ENCODE measurements at regions of chr15 and their contacts with region 1.

Region 1: DNA sequence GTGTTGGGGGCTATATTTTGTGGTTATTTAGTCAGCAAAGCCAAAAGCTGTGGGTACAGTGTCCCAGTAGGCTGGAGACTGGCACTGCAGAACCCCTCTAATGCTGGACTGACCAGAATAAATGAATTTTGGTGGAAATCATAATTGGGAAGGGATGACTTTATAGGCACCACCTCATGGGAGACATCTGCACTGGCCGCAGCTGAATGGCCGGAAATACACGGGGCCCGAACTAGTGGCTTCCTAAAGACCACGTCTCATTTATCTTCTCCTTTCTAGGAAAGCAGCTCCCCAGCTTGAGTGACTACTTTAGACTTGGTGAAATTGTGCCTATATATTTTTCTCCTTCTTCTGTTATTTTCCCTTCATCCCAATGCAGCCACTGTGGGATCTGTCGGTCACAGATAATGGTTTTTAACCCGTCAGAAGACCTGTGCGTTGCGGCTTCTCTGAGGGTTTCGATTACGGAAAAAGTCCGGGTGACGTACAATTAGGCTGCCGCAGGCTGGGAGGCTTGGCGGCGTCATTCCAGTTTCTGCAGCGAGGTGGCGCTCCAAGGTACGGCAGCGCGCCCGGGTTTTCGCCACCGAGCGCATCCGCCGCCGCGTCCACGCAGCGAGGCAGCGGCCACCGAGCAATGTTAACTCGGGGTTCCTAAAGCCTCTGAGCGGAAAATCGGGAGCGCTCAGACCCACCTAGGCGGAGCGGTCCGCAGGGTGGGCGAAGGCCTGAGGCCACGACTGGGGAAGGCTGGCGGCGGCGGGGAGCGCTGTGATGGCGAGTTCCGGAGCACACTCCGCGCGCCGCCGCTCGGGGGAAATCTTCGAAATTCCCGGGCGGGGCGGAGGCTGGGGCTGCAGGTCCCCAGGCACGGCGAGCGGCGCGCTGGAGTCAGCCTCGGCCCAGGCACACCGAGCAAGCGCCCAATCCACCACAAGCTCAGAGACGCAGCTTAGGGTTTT is 26.3 kb downstream of the NR2F2 start:
- DNase-seq: peak; percentile 88
- H3K4me3 ChIP-seq: peak overlapping the region; percentile 46 to 81 (median 65)
- H3K27ac ChIP-seq: peak overlapping the region; percentile 76
- H3K4me1 ChIP-seq: peaks cover 71% of the 10 kb centered on the region
- H3K27me3 ChIP-seq: no peaks in the 10 kb centered on the region
- CTCF ChIP-seq: peak; percentile 94 to 98
- POLR2A ChIP-seq: no peak

Region 2: DNA sequence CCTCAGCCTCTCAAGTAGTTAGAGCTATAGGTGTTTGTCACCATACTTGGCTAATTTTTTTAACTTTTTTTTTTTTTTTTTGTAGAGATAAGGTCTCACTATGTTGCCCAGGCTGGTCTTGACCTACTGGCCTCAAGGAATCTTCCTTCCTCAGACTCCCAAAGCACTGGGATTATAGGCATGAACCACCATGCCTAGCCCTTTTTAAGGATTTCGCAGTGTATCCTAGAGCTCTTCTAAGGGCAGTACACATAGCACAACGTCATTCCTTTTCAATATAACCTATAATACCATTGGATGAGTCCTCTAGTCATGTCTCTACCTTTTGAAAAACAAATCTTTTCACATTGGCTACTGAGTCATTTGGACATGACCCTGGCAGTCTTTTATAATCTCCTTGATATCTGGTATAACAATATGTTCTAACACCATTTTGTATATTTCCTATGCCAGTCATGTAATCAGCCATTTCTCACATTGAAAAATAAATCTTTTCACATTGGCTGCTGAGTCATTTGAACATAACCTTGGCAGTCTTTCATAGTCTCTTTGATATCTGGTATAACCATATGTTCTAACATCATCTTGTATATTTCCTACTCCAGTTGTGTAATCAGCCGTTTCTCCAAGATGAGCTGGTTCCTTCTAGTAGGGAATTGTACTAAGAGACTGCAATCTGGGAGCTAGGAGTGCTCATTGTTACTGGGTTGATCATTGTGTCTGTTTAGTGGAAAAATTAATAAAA is 1180.7 kb before region 1 on chr15:
- CTCF ChIA-PET with region 1: no interaction called
- POLR2A ChIA-PET with region 1: no interaction called
- dilution Hi-C with region 1: no loop called
- intact Hi-C with region 1: loop called (anchors 2 kb)
- DNase-seq: peak; percentile 94
- H3K4me3 ChIP-seq: no peak overlapping the region
- H3K27ac ChIP-seq: peak overlapping the region; percentile 95
- H3K4me1 ChIP-seq: peaks cover 30% of the 10 kb centered on the region
- H3K27me3 ChIP-seq: no peaks in the 10 kb centered on the region
- CTCF ChIP-seq: no peak
- POLR2A ChIP-seq: no peak

Region 3: GRCh38 chr15:95528920-95529319 is 827.9 kb before region 1 on chr15:
- CTCF ChIA-PET with region 1: no interaction called
- POLR2A ChIA-PET with region 1: no interaction called
- dilution Hi-C with region 1: no loop called
- intact Hi-C with region 1: no loop called
- DNase-seq: no peak
- H3K4me3 ChIP-seq: no peak overlapping the region
- H3K27ac ChIP-seq: no peak overlapping the region
- H3K4me1 ChIP-seq: no peaks in the 10 kb centered on the region
- H3K27me3 ChIP-seq: no peaks in the 10 kb centered on the region
- CTCF ChIP-seq: no peak
- POLR2A ChIP-seq: no peak

Region 4: DNA sequence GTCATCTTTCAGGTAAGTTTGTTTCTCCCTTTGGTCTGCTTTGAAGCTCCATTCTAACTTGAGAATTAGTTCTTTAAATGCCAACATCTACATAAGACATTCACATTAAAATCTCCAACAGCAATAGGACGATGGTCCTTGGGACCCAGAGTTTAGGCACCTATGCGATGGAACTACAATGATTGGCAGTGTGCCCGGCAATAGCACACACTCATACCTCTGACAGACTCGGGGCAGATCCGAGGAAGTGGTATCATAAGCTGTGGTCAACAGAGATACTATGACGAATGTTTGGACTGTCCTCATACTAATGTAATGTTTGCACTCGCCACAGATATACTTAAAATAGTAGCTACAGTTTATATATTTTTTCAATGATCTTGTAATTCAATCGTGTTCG is 60.5 kb before region 1 on chr15:
- CTCF ChIA-PET with region 1: no interaction called
- POLR2A ChIA-PET with region 1: no interaction called
- dilution Hi-C with region 1: no loop called
- intact Hi-C with region 1: no loop called
- DNase-seq: no peak
- H3K4me3 ChIP-seq: no peak overlapping the region
- H3K27ac ChIP-seq: no peak overlapping the region
- H3K4me1 ChIP-seq: no peaks in the 10 kb centered on the region
- H3K27me3 ChIP-seq: no peaks in the 10 kb centered on the region
- CTCF ChIP-seq: no peak
- POLR2A ChIP-seq: no peak

Region 5: GRCh38 chr15:96428742-96429141 is 72.0 kb after region 1 on chr15:
- CTCF ChIA-PET with region 1: no interaction called
- POLR2A ChIA-PET with region 1: no interaction called
- dilution Hi-C with region 1: no loop called
- intact Hi-C with region 1: loop called (anchors 2 kb)
- DNase-seq: peak; percentile 58
- H3K4me3 ChIP-seq: no peak overlapping the region
- H3K27ac ChIP-seq: peak overlapping the region; percentile 28
- H3K4me1 ChIP-seq: peaks cover 17% of the 10 kb centered on the region
- H3K27me3 ChIP-seq: no peaks in the 10 kb centered on the region
- CTCF ChIP-seq: no peak
- POLR2A ChIP-seq: no peak

Region 6: GRCh38 chr15:96574782-96575181 is 218.0 kb after region 1 on chr15:
- CTCF ChIA-PET with region 1: no interaction called
- POLR2A ChIA-PET with region 1: no interaction called
- dilution Hi-C with region 1: no loop called
- intact Hi-C with region 1: no loop called
- DNase-seq: no peak
- H3K4me3 ChIP-seq: no peak overlapping the region
- H3K27ac ChIP-seq: no peak overlapping the region
- H3K4me1 ChIP-seq: no peaks in the 10 kb centered on the region
- H3K27me3 ChIP-seq: peaks cover 0 to 3% of the 10 kb centered on the region in 2 experiments
- CTCF ChIP-seq: no peak
- POLR2A ChIP-seq: no peak

Region 7: GRCh38 chr15:96701443-96701842 is 344.7 kb after region 1 on chr15:
- CTCF ChIA-PET with region 1: no interaction called
- POLR2A ChIA-PET with region 1: no interaction called
- dilution Hi-C with region 1: no loop called
- intact Hi-C with region 1: loop called (anchors 5 kb)
- DNase-seq: no peak
- H3K4me3 ChIP-seq: no peak overlapping the region
- H3K27ac ChIP-seq: no peak overlapping the region
- H3K4me1 ChIP-seq: no peaks in the 10 kb centered on the region
- H3K27me3 ChIP-seq: no peaks in the 10 kb centered on the region
- CTCF ChIP-seq: no peak
- POLR2A ChIP-seq: no peak

Region 8: GRCh38 chr15:97009031-97009431 is 652.3 kb after region 1 on chr15:
- CTCF ChIA-PET with region 1: no interaction called
- POLR2A ChIA-PET with region 1: no interaction called
- dilution Hi-C with region 1: no loop called
- intact Hi-C with region 1: no loop called
- DNase-seq: no peak
- H3K4me3 ChIP-seq: no peak overlapping the region
- H3K27ac ChIP-seq: no peak overlapping the region
- H3K4me1 ChIP-seq: no peaks in the 10 kb centered on the region
- H3K27me3 ChIP-seq: no peaks in the 10 kb centered on the region
- CTCF ChIP-seq: no peak
- POLR2A ChIP-seq: no peak

Region 9: GRCh38 chr15:97248376-97248775 is 891.6 kb after region 1 on chr15:
- CTCF ChIA-PET with region 1: interaction called, 63 read pairs
- POLR2A ChIA-PET with region 1: no interaction called
- dilution Hi-C with region 1: no loop called
- intact Hi-C with region 1: loop called (anchors 1 kb)
- DNase-seq: no peak
- H3K4me3 ChIP-seq: no peak overlapping the region
- H3K27ac ChIP-seq: no peak overlapping the region
- H3K4me1 ChIP-seq: no peaks in the 10 kb centered on the region
- H3K27me3 ChIP-seq: no peaks in the 10 kb centered on the region
- CTCF ChIP-seq: no peak
- POLR2A ChIP-seq: no peak

Region 10: DNA sequence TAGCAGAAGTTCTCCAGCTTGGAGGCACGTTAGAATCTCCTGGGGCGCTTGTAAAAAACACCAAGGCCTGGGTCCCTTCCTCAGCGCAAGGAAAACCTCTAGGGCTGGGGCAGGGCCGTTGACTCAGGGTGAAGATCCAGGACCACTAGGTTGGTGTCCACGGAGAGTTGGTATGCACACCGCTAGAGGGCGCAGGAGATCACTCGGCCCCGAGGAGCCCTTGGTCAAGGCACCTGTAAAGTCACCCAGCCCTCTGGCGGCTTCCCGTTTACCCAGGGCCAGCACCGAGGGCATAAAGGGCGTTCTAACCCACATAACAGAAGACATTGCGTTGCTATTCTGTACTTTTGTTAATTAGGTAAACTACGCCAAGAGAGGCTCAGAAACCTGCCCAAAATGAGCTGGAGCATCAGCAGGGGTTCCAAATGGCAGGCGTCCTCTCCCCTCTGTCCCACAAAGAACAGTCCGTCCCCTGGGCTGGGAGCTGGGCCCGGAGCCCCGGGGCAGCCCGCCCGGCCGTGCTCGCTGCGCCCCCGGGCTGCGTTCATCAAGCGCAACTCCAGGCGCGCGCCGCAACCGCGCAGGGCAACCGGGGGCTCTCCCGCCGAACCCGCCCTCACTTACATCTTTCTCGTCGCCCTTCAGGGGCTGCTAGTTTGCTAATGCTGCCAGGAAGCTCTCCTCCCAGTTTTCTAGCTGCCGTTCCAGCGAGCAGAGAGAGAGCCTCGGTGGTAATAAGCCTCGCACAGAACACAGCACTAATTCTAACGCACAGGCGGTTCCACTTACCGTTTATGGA is 1935.9 kb after region 1 on chr15:
- CTCF ChIA-PET with region 1: no interaction called
- POLR2A ChIA-PET with region 1: no interaction called
- dilution Hi-C with region 1: no loop called
- intact Hi-C with region 1: loop called (anchors 10 kb)
- DNase-seq: peak; percentile 6
- H3K4me3 ChIP-seq: no peak overlapping the region
- H3K27ac ChIP-seq: no peak overlapping the region
- H3K4me1 ChIP-seq: no peaks in the 10 kb centered on the region
- H3K27me3 ChIP-seq: no peaks in the 10 kb centered on the region
- CTCF ChIP-seq: peak; percentile 62 to 77
- POLR2A ChIP-seq: no peak

Measured in endothelial cell of umbilical vein (primary cell).